WTC11 (cell line): ENCODE measurements at regions of chr14 and their contacts with region 1.

Region 1: GRCh38 chr14:78902010-78902623 is 731.9 kb downstream of the NRXN3 start:
- DNase-seq: peak; percentile 55
- ATAC-seq: peak; percentile 66
- H3K4me3 Mint-ChIP-seq: no peak overlapping the region
- H3K27ac Mint-ChIP-seq: no peak overlapping the region
- H3K4me1 Mint-ChIP-seq: peaks cover 33% of the 10 kb centered on the region
- H3K27me3 Mint-ChIP-seq: no peaks in the 10 kb centered on the region; the same call in 1 of the 2 replicates
- CTCF ChIP-seq: peak; percentile 52

Region 2: DNA sequence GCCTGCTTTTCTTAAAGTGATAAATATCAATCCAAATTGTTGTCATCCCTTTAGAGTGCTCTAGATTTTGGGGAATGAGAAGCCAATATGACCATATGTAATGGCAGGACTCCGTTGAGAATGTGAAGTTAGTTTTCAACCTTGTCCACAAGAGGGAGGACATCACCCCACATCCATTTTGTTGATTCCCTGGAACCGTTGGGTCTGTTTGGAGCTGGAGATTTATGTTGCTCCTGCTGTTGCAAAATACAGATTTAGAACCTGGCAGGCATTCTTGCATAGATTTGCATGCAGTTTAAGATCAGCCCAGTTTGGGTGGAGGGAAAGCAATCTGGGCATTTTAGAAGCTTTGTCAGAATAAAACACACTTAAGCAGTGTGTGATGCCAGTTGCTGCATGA is 111.8 kb before region 1 on chr14:
- CTCF ChIA-PET with region 1: interaction called, 10 read pairs
- POLR2A ChIA-PET with region 1: no interaction called
- DNase-seq: no peak
- ATAC-seq: peak; percentile 83
- H3K4me3 Mint-ChIP-seq: no peak overlapping the region
- H3K27ac Mint-ChIP-seq: no peak overlapping the region
- H3K4me1 Mint-ChIP-seq: peaks cover 9% of the 10 kb centered on the region
- H3K27me3 Mint-ChIP-seq: no peaks in the 10 kb centered on the region
- CTCF ChIP-seq: no peak

Region 3: DNA sequence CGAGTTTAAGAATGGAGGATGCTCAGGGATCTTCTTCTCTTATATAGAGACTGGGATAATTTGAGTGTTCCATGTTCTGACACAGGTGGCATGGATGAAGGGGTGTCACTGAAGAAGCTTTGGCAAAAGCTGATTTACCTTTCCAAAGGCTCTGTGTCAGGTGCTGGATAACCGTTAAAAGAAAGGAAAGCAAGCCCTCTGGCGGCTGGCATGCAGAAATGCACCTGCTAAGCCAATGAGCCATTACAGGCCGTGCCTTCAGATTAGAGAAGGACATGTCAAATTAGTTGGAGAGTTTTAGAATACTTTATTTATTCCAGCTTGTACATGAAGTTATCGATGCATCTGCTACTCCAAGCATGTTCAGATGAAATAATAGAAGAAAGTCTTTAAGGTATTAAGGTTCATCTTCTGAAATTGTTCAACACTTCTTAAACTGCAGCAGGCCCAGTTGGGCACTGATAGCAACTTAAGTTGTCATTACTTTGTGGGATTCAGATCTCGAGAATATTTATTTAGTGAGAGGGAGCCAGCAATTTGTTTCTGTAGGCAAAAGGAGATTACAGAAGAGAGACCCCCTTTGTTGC is 53.8 kb before region 1 on chr14:
- CTCF ChIA-PET with region 1: interaction called, 16 read pairs
- POLR2A ChIA-PET with region 1: no interaction called
- DNase-seq: peak; percentile 69
- ATAC-seq: peak; percentile 90
- H3K4me3 Mint-ChIP-seq: no peak overlapping the region
- H3K27ac Mint-ChIP-seq: peak overlapping the region; percentile 7; the same call in 1 of the 2 replicates
- H3K4me1 Mint-ChIP-seq: peaks cover 39% of the 10 kb centered on the region
- H3K27me3 Mint-ChIP-seq: no peaks in the 10 kb centered on the region
- CTCF ChIP-seq: peak; percentile 96

Region 4: DNA sequence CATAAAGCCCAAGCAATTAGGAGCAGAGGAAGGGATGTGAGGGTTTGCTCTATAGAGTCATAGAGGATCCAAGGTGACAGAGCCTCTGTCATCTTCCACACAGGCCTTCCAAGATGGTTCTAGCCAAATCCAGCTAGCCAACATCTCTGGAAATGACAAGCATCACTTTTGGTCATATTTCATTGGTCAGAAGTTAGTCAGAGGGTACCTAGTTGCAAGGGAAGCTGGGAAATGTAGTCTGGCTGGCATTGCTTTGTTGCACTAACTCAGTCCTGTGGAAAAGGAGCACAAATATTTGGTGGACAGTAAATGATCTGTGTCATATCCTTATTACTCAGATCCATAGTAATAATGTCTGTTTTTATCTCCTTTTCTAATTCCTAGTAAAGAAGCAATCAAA is 16.2 kb before region 1 on chr14:
- CTCF ChIA-PET with region 1: no interaction called
- POLR2A ChIA-PET with region 1: no interaction called
- DNase-seq: no peak
- ATAC-seq: peak; percentile 61; the same call in 1 of the 2 replicates
- H3K4me3 Mint-ChIP-seq: no peak overlapping the region
- H3K27ac Mint-ChIP-seq: no peak overlapping the region
- H3K4me1 Mint-ChIP-seq: no peaks in the 10 kb centered on the region
- H3K27me3 Mint-ChIP-seq: no peaks in the 10 kb centered on the region
- CTCF ChIP-seq: no peak